Transverse colon (tissue), 4 donors: ENCODE measurements at regions of chr1 and their contacts with region 1.

Region 1: DNA sequence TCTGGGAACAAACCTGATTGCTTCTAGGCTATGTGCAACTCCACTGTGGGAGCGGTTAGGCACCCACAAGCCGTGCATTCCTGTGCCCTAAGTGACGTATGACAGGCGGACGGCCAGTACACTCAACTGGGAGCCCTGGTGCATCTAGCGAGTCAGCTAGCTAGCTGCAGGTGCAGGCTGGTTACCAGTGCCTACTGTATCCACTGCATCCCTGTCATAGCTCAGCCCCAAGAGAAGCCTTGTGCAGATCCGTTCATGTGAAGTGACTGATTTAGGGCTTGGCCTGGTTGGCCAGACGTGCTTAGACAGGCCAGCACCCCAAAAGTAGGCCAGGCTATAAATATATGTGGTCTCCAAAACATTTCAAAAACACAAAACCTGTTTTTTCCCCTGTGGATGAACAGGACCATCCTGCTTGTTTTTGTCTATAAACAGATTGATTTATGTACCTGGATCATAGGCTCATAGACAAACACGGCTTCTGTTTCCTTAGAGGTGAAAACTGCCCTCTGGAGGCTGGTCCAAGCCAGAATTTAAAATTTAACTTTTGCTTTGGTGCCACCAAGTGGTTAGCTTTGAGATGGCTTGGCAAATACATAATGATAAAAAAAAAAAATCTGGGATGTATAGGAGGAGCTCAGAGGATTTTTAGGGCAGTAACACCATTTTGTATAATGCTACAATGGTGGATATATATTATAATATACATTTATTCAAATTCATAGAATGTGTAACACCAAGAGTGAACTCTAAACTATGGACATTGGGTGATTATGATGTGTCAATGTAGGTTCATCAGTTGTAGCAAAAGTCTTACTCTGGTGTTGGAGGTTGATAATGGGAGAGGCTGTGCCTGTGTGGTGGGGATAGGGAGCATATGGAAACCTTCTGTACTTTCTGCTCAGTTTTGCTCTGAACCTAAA is 68.5 kb downstream of the GIPC2 start:
- DNase-seq: peak; percentile 54
- H3K4me3 ChIP-seq: no peak overlapping the region
- H3K27ac ChIP-seq: peak overlapping the region in 1 of 4 donors; percentile 47
- H3K4me1 ChIP-seq: peaks cover 0 to 4% (median 0%) of the 10 kb centered on the region in 4 donors
- H3K27me3 ChIP-seq: no peaks in the 10 kb centered on the region
- CTCF ChIP-seq: peak; percentile 82 to 91 (median 86)
- EP300 ChIP-seq: no peak
- POLR2A ChIP-seq: no peak

Region 2: GRCh38 chr1:77706321-77706720 is 408.0 kb before region 1 on chr1:
- in situ Hi-C with region 1: loop called in 1 of 4 experiments (anchors 25 kb)
- intact Hi-C with region 1: no loop called
- DNase-seq: no peak
- H3K4me3 ChIP-seq: no peak overlapping the region
- H3K27ac ChIP-seq: no peak overlapping the region
- H3K4me1 ChIP-seq: no peaks in the 10 kb centered on the region
- H3K27me3 ChIP-seq: no peaks in the 10 kb centered on the region
- CTCF ChIP-seq: no peak
- EP300 ChIP-seq: no peak
- POLR2A ChIP-seq: no peak

Region 3: GRCh38 chr1:77779529-77780281 is 334.6 kb before region 1 on chr1 and contains the start of gene MIGA1:
- in situ Hi-C with region 1: no loop called
- intact Hi-C with region 1: no loop called
- DNase-seq: peak; percentile 92
- H3K4me3 ChIP-seq: peak within 1 kb of the TSS; percentile 62 to 75 (median 73)
- H3K27ac ChIP-seq: peak within 1 kb of the TSS; percentile 80 to 85 (median 82)
- H3K4me1 ChIP-seq: peaks cover 0 to 34% (median 2%) of the 10 kb centered on the region in 4 donors
- H3K27me3 ChIP-seq: no peaks in the 10 kb centered on the region
- CTCF ChIP-seq: no peak
- EP300 ChIP-seq: no peak
- POLR2A ChIP-seq: peak; percentile 65
- total RNA-seq, gene MIGA1: 8.2 to 19.1 (median 18.0) TPM

Region 4: GRCh38 chr1:77825131-77825709 is 289.1 kb before region 1 on chr1:
- in situ Hi-C with region 1: loop called in 3 of 4 experiments (anchors 25 kb)
- intact Hi-C with region 1: no loop called
- DNase-seq: peak; percentile 10
- H3K4me3 ChIP-seq: no peak overlapping the region
- H3K27ac ChIP-seq: peak overlapping the region in 1 of 4 donors; percentile 11
- H3K4me1 ChIP-seq: peaks cover 0 to 3% (median 0%) of the 10 kb centered on the region in 4 donors
- H3K27me3 ChIP-seq: no peaks in the 10 kb centered on the region
- CTCF ChIP-seq: peak; percentile 22 to 29 (median 28)
- EP300 ChIP-seq: no peak
- POLR2A ChIP-seq: no peak

Region 5: DNA sequence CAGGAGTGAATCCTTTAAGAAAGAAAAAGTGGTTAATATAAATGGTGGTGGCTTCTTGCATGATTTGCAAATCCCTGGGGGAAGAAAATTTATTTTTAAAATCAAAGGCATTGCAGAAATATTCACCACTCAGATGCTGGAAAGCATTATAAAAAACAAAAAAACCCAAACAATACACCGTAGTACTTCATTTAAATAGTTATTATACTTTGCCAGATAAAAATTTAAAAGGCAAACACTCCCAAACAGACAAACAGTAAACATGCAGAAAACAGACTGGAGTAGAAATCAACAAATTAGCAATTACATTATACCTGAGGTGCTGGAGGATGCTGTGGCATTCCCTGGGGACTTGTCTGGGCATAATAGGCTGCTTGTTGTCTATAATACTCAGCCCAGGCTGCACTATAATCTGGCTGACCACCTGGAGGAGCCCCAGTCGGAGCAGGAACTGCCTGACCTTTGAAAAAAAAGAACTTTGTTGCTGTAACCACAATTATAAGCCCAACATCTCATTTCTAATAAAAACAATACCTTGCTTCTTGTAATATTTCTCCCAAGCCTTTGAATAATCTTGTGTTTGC is 165.4 kb before region 1 on chr1:
- in situ Hi-C with region 1: loop called in 2 of 4 experiments (anchors 25 kb)
- intact Hi-C with region 1: no loop called
- DNase-seq: no peak
- H3K4me3 ChIP-seq: no peak overlapping the region
- H3K27ac ChIP-seq: no peak overlapping the region
- H3K4me1 ChIP-seq: peaks cover 0 to 13% (median 0%) of the 10 kb centered on the region in 4 donors
- H3K27me3 ChIP-seq: no peaks in the 10 kb centered on the region
- CTCF ChIP-seq: peak in 1 of 5 experiments; percentile 3
- EP300 ChIP-seq: no peak
- POLR2A ChIP-seq: no peak

Region 6: DNA sequence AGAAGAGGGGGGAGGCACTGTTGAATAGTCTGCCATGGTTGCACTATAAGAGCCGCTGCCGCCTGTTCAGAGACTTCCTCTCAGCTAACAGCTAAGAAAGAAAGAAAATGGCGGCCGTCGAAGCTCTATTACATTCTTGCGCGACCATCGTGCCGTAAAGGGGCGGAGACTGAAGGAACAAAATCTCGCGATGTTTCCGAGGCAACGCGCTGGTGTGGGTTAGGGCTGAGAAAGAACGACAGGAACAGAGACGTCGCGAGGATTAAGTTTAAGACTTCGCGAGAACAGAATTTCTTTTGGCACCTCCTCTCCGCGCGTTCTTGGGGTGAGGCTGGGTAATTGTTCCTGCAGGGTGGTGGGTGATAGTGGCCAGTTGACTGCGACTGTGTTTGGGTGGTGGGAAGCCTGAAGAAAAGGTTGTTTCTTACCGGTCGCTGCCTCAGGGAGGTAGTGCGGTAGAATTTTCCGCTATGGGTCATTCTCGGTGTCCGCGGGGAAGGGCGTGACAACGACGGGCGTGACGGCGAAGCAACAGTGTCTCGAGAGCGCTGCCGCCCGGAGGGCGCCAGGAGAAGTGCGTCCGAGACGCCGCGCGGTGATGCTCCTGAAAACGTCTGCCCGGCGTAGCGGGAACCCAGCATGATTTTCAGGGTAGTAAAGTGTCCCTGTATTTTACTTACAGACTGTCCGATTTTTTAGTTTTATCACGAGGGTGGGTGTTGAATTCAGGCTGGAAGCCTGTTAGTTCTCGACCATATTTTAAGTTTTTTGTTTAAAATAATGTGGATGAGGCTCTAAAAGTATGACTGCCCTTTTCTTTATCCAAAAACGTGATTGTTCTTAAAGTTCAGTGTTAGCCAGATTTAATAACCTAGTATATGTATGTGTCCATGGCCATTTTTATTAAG is 135.1 kb before region 1 on chr1 and contains the start of gene FUBP1:
- in situ Hi-C with region 1: loop called in 2 of 4 experiments (anchors 10 to 25 kb)
- intact Hi-C with region 1: loop called (anchors 5 kb)
- DNase-seq: peak; percentile 97
- H3K4me3 ChIP-seq: peak within 1 kb of the TSS; percentile 54 to 73 (median 62)
- H3K27ac ChIP-seq: peak within 1 kb of the TSS; percentile 97 to 100 (median 98)
- H3K4me1 ChIP-seq: peaks cover 24 to 58% (median 47%) of the 10 kb centered on the region in 4 donors
- H3K27me3 ChIP-seq: no peaks in the 10 kb centered on the region
- CTCF ChIP-seq: peak; percentile 72 to 92 (median 73)
- EP300 ChIP-seq: no peak
- POLR2A ChIP-seq: peak; percentile 80
- total RNA-seq, gene FUBP1: 81.8 to 176 (median 101) TPM

Region 7: DNA sequence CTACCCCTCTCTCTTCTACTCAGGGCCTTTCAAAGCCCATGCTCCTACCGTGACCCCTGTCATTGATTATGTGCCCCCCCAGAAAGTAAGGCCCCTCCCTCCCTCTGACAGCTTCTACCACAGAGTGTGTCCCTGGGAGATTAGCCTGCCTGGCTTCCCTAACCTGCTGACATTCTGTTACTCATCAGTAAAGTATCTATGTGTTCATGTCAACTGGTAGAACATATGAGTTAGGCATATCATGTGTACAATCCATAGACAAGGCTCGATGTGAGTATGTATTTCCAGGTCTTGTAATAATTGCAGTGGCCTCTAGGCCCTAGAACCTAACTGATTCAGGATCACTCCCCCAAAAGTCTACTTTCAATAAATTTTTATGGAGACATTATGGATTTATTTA is 51.5 kb after region 1 on chr1:
- in situ Hi-C with region 1: no loop called
- intact Hi-C with region 1: no loop called
- DNase-seq: no peak
- H3K4me3 ChIP-seq: no peak overlapping the region
- H3K27ac ChIP-seq: no peak overlapping the region
- H3K4me1 ChIP-seq: peaks cover 0 to 2% (median 0%) of the 10 kb centered on the region in 4 donors
- H3K27me3 ChIP-seq: no peaks in the 10 kb centered on the region
- CTCF ChIP-seq: no peak
- EP300 ChIP-seq: no peak
- POLR2A ChIP-seq: no peak

Region 8: GRCh38 chr1:78176448-78176847 is 62.2 kb after region 1 on chr1:
- in situ Hi-C with region 1: no loop called
- intact Hi-C with region 1: no loop called
- DNase-seq: peak; percentile 57
- H3K4me3 ChIP-seq: no peak overlapping the region
- H3K27ac ChIP-seq: peak overlapping the region in 1 of 4 donors; percentile 2
- H3K4me1 ChIP-seq: peaks cover 0 to 22% (median 10%) of the 10 kb centered on the region in 4 donors
- H3K27me3 ChIP-seq: no peaks in the 10 kb centered on the region
- CTCF ChIP-seq: no peak
- EP300 ChIP-seq: no peak
- POLR2A ChIP-seq: no peak